ENCODE measurements at regions of chr15 and their contacts with region 1.

Region 1: DNA sequence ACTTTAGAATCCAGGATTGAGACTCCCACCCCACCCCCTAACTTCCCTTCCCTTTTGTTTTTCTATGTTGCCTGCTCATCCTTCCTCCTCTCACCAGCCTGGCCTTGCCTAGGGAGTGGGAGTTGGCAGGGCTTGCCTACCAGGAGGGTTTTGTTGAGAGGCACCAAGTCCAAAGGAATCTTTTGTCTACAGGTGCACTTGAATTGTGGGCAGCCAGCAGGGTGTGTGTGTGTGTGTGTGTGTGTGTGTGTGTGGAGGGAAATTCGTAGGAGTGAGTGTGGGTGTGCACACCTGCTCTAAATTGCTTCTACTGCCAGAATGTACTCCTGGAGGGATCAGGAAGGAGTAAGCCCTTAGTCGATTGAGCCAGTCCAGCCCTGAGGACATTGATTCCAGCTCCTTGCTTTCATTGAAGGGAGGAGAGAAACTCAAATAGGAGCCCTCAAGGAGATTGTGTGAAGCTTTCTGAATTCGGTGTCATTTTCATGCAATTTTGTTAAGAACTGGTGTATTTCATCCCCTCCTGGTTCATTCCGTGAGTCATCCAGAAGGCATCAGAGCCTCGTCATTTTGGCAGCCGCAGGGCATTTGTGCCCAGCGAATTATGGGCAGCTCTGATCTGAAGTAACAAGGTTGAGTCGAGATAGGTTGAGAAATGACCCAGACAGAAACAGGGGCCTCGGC is 112.1 kb downstream of the SLCO3A1 start:
- DNase-seq: peak; percentile 78 to 86
- ATAC-seq: peak; percentile 63
- H3K4me3 ChIP-seq: no peak overlapping the region
- H3K27ac ChIP-seq: peak overlapping the region; percentile 38 to 85
- H3K4me1 ChIP-seq: peaks cover 0 to 7% of the 10 kb centered on the region in 2 donors
- H3K27me3 ChIP-seq: no peaks in the 10 kb centered on the region

Region 2: GRCh38 chr15:91921188-91921842 is 44.3 kb before region 1 on chr15:
- intact Hi-C with region 1: loop called in 1 of 2 experiments (anchors 5 kb)
- DNase-seq: no peak
- ATAC-seq: no peak
- H3K4me3 ChIP-seq: no peak overlapping the region
- H3K27ac ChIP-seq: no peak overlapping the region
- H3K4me1 ChIP-seq: peaks cover 0 to 12% of the 10 kb centered on the region in 2 donors
- H3K27me3 ChIP-seq: no peaks in the 10 kb centered on the region

Region 3: GRCh38 chr15:92034227-92034626 is 68.6 kb after region 1 on chr15:
- intact Hi-C with region 1: no loop called
- DNase-seq: no peak
- ATAC-seq: no peak
- H3K4me3 ChIP-seq: no peak overlapping the region
- H3K27ac ChIP-seq: peak overlapping the region; percentile 5 to 70
- H3K4me1 ChIP-seq: peaks cover 5 to 13% of the 10 kb centered on the region in 2 donors
- H3K27me3 ChIP-seq: no peaks in the 10 kb centered on the region

Region 4: GRCh38 chr15:92069308-92070250 is 103.9 kb after region 1 on chr15:
- intact Hi-C with region 1: loop called in 1 of 2 experiments (anchors 5 kb)
- DNase-seq: peak in 1 of 2 donors; percentile 84
- ATAC-seq: peak; percentile 78
- H3K4me3 ChIP-seq: peak overlapping the region; percentile 15 to 27
- H3K27ac ChIP-seq: peak overlapping the region in 1 of 2 donors; percentile 61
- H3K4me1 ChIP-seq: peaks cover 0 to 2% of the 10 kb centered on the region in 2 donors
- H3K27me3 ChIP-seq: no peaks in the 10 kb centered on the region

Region 5: DNA sequence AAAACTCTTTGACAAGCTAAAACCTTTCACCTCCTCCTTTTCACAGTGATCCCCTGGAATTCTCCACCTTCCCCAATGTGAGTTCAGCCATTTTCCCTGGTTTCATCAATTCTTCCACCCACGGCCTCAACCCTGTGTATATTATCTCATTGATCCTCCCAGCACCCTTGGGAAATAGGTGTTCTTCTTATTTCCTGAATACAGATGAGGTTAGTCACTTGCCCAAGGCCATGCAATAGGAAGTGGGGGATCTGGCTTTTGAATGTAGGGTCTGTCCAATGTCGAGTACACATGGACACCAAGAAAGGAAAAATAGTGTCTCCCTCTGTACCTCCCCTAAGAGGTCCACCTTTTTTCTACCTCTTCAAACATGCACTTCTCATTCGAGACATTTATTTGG is 165.3 kb after region 1 on chr15:
- intact Hi-C with region 1: no loop called
- DNase-seq: no peak
- ATAC-seq: no peak
- H3K4me3 ChIP-seq: no peak overlapping the region
- H3K27ac ChIP-seq: no peak overlapping the region
- H3K4me1 ChIP-seq: no peaks in the 10 kb centered on the region
- H3K27me3 ChIP-seq: no peaks in the 10 kb centered on the region